ENCODE measurements at regions of chr11 and their contacts with region 1.

Region 1: GRCh38 chr11:128157423-128158298 is 429.7 kb downstream of the ETS1 start:
- DNase-seq: peak; percentile 87
- H3K4me3 ChIP-seq: peak overlapping the region; percentile 66
- H3K27ac ChIP-seq: no peak overlapping the region
- H3K4me1 ChIP-seq: no peaks in the 10 kb centered on the region
- H3K27me3 ChIP-seq: no peaks in the 10 kb centered on the region

Region 2: GRCh38 chr11:128956401-128957201 is 798.9 kb after region 1 on chr11:
- in situ Hi-C with region 1: loop called (anchors 25 kb)
- DNase-seq: peak; percentile 81
- H3K4me3 ChIP-seq: no peak overlapping the region
- H3K27ac ChIP-seq: no peak overlapping the region
- H3K4me1 ChIP-seq: peaks cover 6% of the 10 kb centered on the region; the same call in 1 of the 2 replicates
- H3K27me3 ChIP-seq: no peaks in the 10 kb centered on the region; the same call in 1 of the 2 replicates